Spleen (tissue), 13 donors: ENCODE measurements at regions of chr9 and their contacts with region 1.

Region 1: GRCh38 chr9:115013998-115014397 is 83.6 kb upstream of the TNFSF8 start:
- DNase-seq: peak; percentile 91
- H3K4me3 ChIP-seq: no peak overlapping the region
- H3K27ac ChIP-seq: no peak overlapping the region
- H3K4me1 ChIP-seq: peaks cover 0 to 8% (median 4%) of the 10 kb centered on the region in 6 donors
- H3K27me3 ChIP-seq: no peaks in the 10 kb centered on the region
- CTCF ChIP-seq: peak; percentile 58 to 91 (median 83)
- POLR2A ChIP-seq: no peak

Region 2: DNA sequence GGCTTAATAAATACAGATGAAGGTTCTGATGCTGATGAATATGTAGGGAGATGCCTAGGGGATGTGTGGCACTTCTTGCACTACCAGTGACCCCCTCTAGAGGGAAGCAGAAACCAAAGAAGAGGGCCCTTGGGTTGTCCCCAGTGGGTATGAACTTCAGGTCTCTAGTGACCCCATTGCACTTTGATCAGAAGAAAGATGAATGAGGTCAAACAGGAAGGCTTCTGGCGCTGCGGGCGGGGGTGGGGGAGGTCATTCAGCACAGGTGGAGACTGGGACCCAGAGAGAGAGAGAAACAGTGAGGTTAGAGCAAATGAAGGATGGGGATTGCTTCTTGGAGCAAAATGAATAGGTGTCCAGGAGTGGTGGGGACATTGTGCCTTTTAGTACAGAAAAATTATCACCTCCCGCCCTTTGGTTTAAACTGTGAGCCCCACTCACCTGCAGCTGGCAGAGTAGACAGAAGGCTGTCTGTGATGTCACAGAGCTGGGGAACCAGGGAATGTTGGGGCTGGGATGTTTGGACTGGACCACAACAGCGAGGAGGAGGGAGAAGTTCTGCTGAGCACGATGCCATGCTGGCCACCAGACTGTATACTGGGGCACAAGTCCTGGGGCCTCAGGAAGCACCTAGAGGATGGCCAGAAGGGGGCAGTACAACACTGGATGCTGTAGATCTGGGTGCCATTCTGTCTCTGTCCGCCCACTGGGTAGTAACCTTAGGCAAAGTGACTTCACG is 332.2 kb before region 1 on chr9 and contains the start of gene TEX48:
- intact Hi-C with region 1: loop called (anchors 5 kb)
- DNase-seq: peak; percentile 78
- H3K4me3 ChIP-seq: no peak within 1 kb of the TSS
- H3K27ac ChIP-seq: no peak within 1 kb of the TSS
- H3K4me1 ChIP-seq: peaks cover 0 to 8% (median 2%) of the 10 kb centered on the region in 6 donors
- H3K27me3 ChIP-seq: peaks cover 0 to 17% (median 0%) of the 10 kb centered on the region in 7 donors
- CTCF ChIP-seq: peak; percentile 48 to 71 (median 65)
- POLR2A ChIP-seq: no peak
- total RNA-seq, gene TEX48: not detected

Region 3: DNA sequence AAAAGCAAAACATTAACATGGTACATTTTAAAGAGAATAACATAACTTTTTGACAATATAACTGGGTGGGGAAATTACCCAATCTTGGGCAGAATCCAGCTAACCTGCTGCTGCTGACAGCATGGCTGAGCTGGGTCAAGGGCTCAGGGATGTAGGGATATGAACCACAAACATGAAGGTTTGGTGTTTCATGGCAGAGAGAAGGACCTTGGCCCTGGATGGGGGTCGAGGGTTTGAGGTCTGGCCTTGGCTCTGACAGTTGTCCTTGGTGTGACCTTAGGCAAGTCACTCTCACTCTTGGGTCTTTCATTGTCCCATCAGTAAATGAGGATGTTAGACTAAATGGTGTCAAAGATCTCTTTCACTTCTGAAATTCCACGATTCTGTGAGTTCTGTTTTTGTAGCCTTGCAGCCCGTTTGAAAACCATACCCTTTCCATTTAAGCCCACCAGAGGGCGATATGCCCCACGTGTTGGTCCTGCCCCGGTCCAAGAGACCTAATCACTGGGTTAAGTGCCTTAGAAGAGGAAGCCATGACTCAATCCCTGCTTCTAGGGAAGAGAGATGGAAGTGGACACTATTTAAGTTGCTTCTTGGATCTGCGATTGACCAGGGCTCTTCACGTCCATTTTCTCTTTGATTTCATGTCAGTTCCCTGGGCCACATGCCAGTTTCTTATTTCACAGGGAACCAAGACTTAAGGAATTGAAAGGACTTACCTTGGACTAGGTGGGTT is 275.2 kb before region 1 on chr9:
- intact Hi-C with region 1: loop called (anchors 2 kb)
- DNase-seq: peak; percentile 90
- H3K4me3 ChIP-seq: no peak overlapping the region
- H3K27ac ChIP-seq: peak overlapping the region in 1 of 8 donors; percentile 43
- H3K4me1 ChIP-seq: peaks cover 0 to 41% (median 22%) of the 10 kb centered on the region in 6 donors
- H3K27me3 ChIP-seq: no peaks in the 10 kb centered on the region
- CTCF ChIP-seq: peak; percentile 84 to 97 (median 93)
- POLR2A ChIP-seq: no peak